Mammary epithelial cell (primary cell): ENCODE measurements at regions of chr22 and their contacts with region 1.

Region 1: GRCh38 chr22:29306175-29306834 is at the start of gene GAS2L1:
- DNase-seq: peak; percentile 70
- H3K4me3 ChIP-seq: peak within 1 kb of the TSS; percentile 57 to 80 (median 73)
- H3K27ac ChIP-seq: peak within 1 kb of the TSS; percentile 57
- H3K4me1 ChIP-seq: peaks cover 41% of the 10 kb centered on the region
- H3K27me3 ChIP-seq: no peaks in the 10 kb centered on the region
- CTCF ChIP-seq: peak; percentile 31 to 67
- total RNA-seq, gene GAS2L1: 15.8 to 29.7 TPM

Region 2: GRCh38 chr22:29245637-29246385 is 60.5 kb before region 1 on chr22:
- CTCF ChIA-PET with region 1: no interaction called
- dilution Hi-C with region 1: no loop called
- in situ Hi-C with region 1: no loop called
- intact Hi-C with region 1: no loop called
- DNase-seq: peak; percentile 34
- H3K4me3 ChIP-seq: no peak overlapping the region
- H3K27ac ChIP-seq: no peak overlapping the region
- H3K4me1 ChIP-seq: no peaks in the 10 kb centered on the region
- H3K27me3 ChIP-seq: peaks cover 3% of the 10 kb centered on the region
- CTCF ChIP-seq: peak; percentile 96 to 98

Region 3: GRCh38 chr22:29359469-29359868 is 53.2 kb after region 1 on chr22:
- CTCF ChIA-PET with region 1: no interaction called
- dilution Hi-C with region 1: no loop called
- in situ Hi-C with region 1: no loop called
- intact Hi-C with region 1: loop called (anchors 1 kb)
- DNase-seq: no peak
- H3K4me3 ChIP-seq: no peak overlapping the region
- H3K27ac ChIP-seq: no peak overlapping the region
- H3K4me1 ChIP-seq: no peaks in the 10 kb centered on the region
- H3K27me3 ChIP-seq: no peaks in the 10 kb centered on the region
- CTCF ChIP-seq: peak; percentile 33 to 50

Region 4: GRCh38 chr22:29375398-29376076 is 69.2 kb after region 1 on chr22:
- CTCF ChIA-PET with region 1: no interaction called
- dilution Hi-C with region 1: loop called (anchors 5 kb)
- in situ Hi-C with region 1: no loop called
- intact Hi-C with region 1: no loop called
- DNase-seq: no peak
- H3K4me3 ChIP-seq: no peak overlapping the region
- H3K27ac ChIP-seq: peak overlapping the region; percentile 53
- H3K4me1 ChIP-seq: peaks cover 35% of the 10 kb centered on the region
- H3K27me3 ChIP-seq: no peaks in the 10 kb centered on the region
- CTCF ChIP-seq: no peak

Region 5: DNA sequence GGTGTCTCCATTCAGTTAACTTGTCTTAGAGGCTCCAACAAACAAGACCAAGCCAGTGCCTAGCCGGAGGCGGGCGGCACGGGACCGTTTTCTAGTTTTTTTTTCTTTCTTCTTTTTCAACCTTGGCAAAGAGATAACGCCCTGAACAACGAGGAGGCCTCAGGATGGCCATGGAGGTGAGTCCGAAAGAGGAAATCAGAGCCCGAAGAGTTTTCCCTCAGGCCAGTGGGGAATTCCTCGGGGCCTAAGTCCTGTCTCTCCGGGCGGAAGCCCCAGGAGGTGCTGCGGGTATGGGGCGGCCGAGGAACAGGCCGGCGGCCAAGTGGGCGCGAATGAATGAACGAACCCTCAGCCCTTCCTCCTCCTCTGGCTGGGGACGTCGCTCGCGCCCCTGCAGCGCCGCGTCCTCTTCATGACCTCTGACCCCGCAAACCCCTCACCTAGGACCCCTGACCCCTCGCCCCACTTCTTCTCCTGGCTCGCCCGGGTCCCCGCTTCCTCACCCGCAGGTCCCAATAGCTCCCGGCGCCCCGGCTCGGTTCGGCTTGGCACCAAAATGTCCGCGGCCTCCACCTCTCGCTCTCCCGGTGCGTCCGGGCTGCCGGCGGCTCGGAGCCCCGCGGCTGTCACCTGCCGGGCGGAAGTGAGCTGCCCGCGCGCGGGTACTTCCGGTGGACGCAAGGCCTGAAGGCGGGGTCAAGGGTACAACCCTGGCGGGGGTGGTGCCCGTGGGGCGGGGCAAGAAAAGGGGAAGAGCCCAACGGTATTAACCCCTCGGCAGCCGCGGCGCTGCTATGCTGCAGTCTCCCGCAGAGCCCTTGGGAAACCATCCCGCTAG is 81.8 kb after region 1 on chr22 and contains the start of gene AP1B1:
- CTCF ChIA-PET with region 1: no interaction called
- dilution Hi-C with region 1: no loop called
- in situ Hi-C with region 1: no loop called
- intact Hi-C with region 1: loop called (anchors 2 kb)
- DNase-seq: peak; percentile 88
- H3K4me3 ChIP-seq: peak within 1 kb of the TSS; percentile 77 to 90 (median 84)
- H3K27ac ChIP-seq: peak within 1 kb of the TSS; percentile 46
- H3K4me1 ChIP-seq: peaks cover 5% of the 10 kb centered on the region
- H3K27me3 ChIP-seq: no peaks in the 10 kb centered on the region
- CTCF ChIP-seq: no peak
- total RNA-seq, gene AP1B1: 68.8 to 87.5 TPM